Posterior vena cava (tissue), 2 donors: ENCODE measurements at regions of chr4 and their contacts with region 1.

Region 1: DNA sequence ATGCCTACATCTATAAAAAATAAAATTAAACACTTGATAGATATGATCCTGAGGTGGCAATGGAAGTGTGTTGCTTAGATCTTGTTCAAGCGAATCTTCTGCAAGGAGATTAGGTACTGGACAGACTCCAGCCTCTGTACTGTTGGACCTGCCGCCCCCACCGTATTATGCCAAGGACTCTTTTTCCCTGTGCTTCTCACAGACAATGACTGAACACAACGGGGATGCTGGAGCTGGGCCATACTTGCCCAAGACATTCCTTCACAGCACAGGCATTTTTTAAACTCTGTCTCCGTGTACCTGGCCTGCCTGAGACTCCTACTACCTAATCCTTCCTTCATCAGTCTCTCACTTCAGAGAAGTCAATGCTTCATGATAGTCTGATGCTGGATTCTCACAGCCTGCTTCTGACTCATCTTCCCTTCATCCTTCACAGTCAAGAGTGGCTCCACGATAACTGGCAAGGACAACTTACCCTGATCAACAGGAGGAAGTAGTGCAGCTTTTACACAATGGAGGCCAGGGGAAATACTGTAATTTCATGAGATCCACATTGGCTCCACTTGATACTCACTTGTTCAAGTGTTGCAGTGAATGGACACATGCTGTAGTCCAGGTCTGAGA is 754.6 kb upstream of the AGA start:
- DNase-seq: no peak

Region 2: GRCh38 chr4:177499537-177499936 is 697.3 kb before region 1 on chr4:
- intact Hi-C with region 1: no loop called
- DNase-seq: peak; percentile 62

Region 3: GRCh38 chr4:177826973-177827372 is 369.9 kb before region 1 on chr4:
- intact Hi-C with region 1: no loop called
- DNase-seq: no peak

Region 4: GRCh38 chr4:178105223-178105622 is 91.6 kb before region 1 on chr4:
- intact Hi-C with region 1: no loop called
- DNase-seq: no peak

Region 5: GRCh38 chr4:178255172-178255571 is 58.3 kb after region 1 on chr4:
- intact Hi-C with region 1: loop called in 1 of 2 experiments (anchors 2 kb)
- DNase-seq: no peak